ENCODE measurements at regions of chr1 and their contacts with region 1.

Region 1: GRCh38 chr1:198681831-198682759 is 43.3 kb downstream of the PTPRC start:
- DNase-seq: peak; percentile 94
- H3K4me3 Mint-ChIP-seq: peak overlapping the region; percentile 67
- H3K27ac Mint-ChIP-seq: peak overlapping the region; percentile 96
- H3K4me1 Mint-ChIP-seq: peaks cover 25% of the 10 kb centered on the region
- H3K27me3 Mint-ChIP-seq: no peaks in the 10 kb centered on the region
- CTCF ChIP-seq: no peak

Region 2: DNA sequence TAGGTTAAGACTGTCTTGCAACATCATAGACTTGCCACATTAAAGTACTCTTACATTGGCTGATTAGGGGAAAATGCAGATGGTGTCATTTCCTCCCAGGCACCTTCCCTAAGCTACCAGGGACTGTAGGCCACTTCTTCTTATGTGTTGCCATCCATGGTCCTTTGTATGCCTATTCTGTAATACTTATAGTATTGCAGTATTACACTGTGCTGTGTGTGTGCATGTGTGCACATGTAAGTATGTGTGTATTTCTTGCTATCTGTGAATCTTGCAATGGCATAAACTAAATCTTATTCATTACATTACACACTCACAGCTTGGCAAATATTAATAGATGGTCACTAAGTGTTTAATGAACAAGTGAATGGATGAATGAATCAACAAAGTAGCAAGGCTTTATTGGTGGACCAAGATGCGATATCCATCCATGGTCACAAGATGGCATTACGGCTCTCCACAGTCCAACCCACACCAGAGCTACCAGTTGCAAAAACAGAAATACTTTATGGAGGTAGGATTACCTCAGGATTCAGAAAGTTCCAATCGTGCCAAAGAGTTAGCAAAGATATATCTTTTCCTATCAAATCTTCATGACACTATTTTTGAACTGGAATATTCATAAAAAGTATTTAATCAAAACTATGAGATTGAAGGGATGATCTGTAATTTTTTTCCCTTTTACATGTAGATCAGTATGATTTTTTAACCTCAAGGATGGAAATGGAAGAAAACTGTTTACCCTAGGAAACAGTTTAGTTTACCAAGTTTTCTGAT is 1067.0 kb before region 1 on chr1:
- CTCF ChIA-PET with region 1: interaction called, 4 read pairs
- POLR2A ChIA-PET with region 1: interaction called, 3 read pairs
- intact Hi-C with region 1: loop called (anchors 1 kb)
- DNase-seq: peak; percentile 67
- H3K4me3 Mint-ChIP-seq: no peak overlapping the region
- H3K27ac Mint-ChIP-seq: no peak overlapping the region
- H3K4me1 Mint-ChIP-seq: no peaks in the 10 kb centered on the region
- H3K27me3 Mint-ChIP-seq: no peaks in the 10 kb centered on the region
- CTCF ChIP-seq: peak; percentile 82

Region 3: DNA sequence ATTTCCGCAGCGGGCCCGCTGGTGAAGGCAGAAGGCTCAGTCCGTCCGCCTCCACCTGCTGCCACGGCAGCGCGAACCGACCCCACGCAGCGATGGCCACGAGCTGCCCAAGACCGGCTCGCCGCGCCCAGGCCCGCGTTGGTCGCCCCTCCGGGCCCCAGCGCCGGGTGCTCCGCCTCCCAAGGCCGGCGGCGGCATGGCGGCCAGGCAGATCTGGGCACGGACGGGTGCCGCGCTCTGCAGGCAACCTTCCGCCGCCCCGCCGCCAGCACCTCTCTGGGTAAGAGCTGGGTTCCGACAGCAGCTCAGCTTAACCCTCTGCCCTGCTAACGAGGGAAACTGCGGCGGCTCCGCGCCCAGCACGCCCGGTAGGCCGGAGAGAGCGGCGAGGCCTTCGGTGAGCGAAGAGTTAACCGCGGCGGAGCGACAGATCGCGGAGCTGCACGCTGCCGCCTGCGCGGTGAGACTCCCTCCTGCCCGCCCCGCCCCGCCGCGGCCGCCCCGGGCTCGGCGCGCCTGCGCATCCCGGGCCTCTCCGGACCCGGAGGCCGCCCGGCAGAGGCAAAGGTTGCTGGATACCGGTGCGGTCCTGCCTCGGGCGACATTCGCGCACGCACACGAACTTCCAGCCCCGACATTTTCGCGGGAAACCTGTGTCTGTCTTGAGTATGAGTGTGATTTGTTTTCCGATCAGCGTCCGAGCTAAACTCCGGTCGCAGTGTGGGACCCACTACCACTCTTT is 779.5 kb before region 1 on chr1 and contains the start of gene C1orf53:
- CTCF ChIA-PET with region 1: interaction called, 3 read pairs
- POLR2A ChIA-PET with region 1: interaction called, 10 read pairs
- intact Hi-C with region 1: no loop called
- DNase-seq: peak; percentile 92
- H3K4me3 Mint-ChIP-seq: peak within 1 kb of the TSS; percentile 86
- H3K27ac Mint-ChIP-seq: peak within 1 kb of the TSS; percentile 93
- H3K4me1 Mint-ChIP-seq: peaks cover 26% of the 10 kb centered on the region
- H3K27me3 Mint-ChIP-seq: no peaks in the 10 kb centered on the region
- CTCF ChIP-seq: no peak
- total RNA-seq, gene C1orf53: 10.7 and 15.1 TPM in 2 replicates

Region 4: GRCh38 chr1:198088360-198089071 is 593.6 kb before region 1 on chr1:
- CTCF ChIA-PET with region 1: interaction called, 7 read pairs
- POLR2A ChIA-PET with region 1: interaction called, 3 read pairs
- intact Hi-C with region 1: loop called (anchors 2 kb)
- DNase-seq: peak; percentile 64
- H3K4me3 Mint-ChIP-seq: no peak overlapping the region
- H3K27ac Mint-ChIP-seq: no peak overlapping the region
- H3K4me1 Mint-ChIP-seq: peaks cover 7% of the 10 kb centered on the region
- H3K27me3 Mint-ChIP-seq: no peaks in the 10 kb centered on the region
- CTCF ChIP-seq: peak; percentile 71

Region 5: DNA sequence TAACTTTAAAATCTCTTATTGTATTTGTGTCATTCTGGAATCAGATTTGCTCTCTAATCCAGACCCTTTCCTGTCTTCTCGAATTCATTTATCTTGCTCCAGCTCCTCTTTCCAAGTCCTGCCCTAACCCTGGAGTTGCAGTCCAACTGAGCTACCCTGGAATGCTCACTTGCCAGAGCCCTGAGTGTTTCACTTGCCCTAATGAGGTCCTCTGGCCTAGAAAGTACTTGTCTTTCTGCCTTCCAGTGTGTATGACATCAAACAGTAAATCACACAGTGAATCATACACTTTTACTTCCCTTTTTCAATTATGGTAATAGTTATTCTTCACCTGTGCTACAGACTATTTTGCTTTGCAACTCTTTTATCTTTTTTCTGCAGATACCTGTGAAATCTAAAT is 428.4 kb before region 1 on chr1:
- CTCF ChIA-PET with region 1: no interaction called
- POLR2A ChIA-PET with region 1: no interaction called
- intact Hi-C with region 1: loop called (anchors 10 kb)
- DNase-seq: peak; percentile 46
- H3K4me3 Mint-ChIP-seq: peak overlapping the region; percentile 2
- H3K27ac Mint-ChIP-seq: peak overlapping the region; percentile 77
- H3K4me1 Mint-ChIP-seq: peaks cover 16% of the 10 kb centered on the region
- H3K27me3 Mint-ChIP-seq: no peaks in the 10 kb centered on the region
- CTCF ChIP-seq: no peak

Region 6: DNA sequence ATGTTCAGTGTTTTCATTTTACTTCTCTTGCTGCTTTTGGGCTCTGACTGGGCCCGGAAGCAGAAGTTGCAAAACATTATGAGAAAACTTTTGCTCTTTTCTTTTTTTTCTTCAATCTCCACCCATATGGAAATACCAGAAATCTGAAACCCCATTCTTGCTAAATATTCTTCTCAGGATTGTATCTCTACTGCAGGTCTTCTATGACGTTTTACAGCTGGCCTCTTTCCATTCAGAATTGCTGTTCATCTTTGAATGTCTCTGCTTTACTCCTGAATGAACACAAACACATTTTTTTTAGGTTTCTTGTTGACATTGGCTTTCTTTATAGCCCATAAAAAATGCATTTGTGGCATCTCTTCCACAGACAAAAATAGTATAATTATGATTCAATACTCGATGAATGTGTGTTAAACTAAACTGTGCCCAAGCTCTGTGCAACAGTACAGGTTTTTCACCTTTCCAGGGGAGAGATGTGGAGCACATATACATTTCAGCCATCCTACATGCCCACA is 24.5 kb before region 1 on chr1:
- CTCF ChIA-PET with region 1: interaction called, 7 read pairs
- POLR2A ChIA-PET with region 1: interaction called, 6 read pairs
- intact Hi-C with region 1: loop called (anchors 1 kb)
- DNase-seq: peak; percentile 96
- H3K4me3 Mint-ChIP-seq: peak overlapping the region; percentile 45
- H3K27ac Mint-ChIP-seq: peak overlapping the region; percentile 85
- H3K4me1 Mint-ChIP-seq: peaks cover 24% of the 10 kb centered on the region
- H3K27me3 Mint-ChIP-seq: no peaks in the 10 kb centered on the region
- CTCF ChIP-seq: no peak

Region 7: DNA sequence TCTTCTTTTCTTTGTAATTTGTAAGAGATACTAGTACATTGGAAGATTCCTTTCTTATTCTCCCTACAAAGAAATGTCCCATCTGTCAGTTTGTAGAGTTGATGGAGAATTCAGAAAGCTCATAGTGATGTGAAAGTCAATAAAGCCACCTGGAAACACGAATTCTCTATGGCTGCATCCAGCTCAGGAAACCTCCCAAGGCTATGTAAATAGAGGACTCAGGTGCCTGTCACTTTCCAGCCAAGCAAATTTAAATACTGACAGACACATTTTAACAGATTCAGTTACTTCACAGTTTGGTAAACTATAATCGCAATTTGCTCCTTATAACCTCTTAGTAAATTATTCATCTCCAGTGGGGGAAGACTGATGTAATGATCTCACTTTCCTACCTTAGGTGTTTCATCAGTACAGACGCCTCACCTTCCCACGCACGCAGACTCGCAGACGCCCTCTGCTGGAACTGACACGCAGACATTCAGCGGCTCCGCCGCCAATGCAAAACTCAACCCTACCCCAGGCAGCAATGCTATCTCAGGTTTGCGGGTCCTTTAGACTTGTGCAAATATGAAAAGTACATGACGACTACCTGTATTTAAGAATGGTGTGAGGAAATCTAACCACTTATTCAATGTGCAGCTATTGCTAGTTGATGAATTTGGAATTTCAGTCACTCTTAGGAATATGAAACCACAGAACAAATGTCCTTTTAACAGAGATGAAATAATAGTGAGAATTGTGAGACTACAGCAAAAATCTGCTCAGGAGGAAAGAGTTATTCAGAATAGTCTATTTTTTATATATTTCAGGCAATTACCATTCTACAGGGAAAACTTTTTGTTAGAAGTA is 17.3 kb after region 1 on chr1:
- CTCF ChIA-PET with region 1: interaction called, 12 read pairs
- POLR2A ChIA-PET with region 1: interaction called, 5 read pairs
- intact Hi-C with region 1: no loop called
- DNase-seq: peak; percentile 81
- H3K4me3 Mint-ChIP-seq: no peak overlapping the region
- H3K27ac Mint-ChIP-seq: no peak overlapping the region
- H3K4me1 Mint-ChIP-seq: peaks cover 10% of the 10 kb centered on the region
- H3K27me3 Mint-ChIP-seq: no peaks in the 10 kb centered on the region
- CTCF ChIP-seq: peak; percentile 96

Region 8: GRCh38 chr1:198823626-198824025 is 141.5 kb after region 1 on chr1:
- CTCF ChIA-PET with region 1: no interaction called
- POLR2A ChIA-PET with region 1: no interaction called
- intact Hi-C with region 1: no loop called
- DNase-seq: no peak
- H3K4me3 Mint-ChIP-seq: no peak overlapping the region
- H3K27ac Mint-ChIP-seq: no peak overlapping the region
- H3K4me1 Mint-ChIP-seq: no peaks in the 10 kb centered on the region
- H3K27me3 Mint-ChIP-seq: no peaks in the 10 kb centered on the region
- CTCF ChIP-seq: no peak

Region 9: DNA sequence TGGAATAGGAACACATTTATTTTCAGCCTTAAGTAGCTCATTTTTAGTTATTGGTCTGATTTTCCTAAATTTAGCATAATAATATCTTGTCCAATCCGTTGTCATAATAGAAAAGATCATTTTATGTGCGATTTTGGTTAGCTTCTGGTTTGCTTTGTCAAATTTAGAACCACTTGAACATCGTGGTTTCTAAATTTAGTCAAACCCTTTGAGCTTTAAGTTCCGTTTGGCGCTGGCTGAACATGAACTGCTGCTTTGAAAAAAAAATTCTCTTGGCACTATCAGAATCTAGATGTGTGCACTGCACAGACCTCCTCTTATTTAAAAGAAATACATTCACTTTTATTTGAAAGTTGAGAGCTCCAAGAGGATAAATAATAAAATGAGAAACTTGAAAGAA is 327.4 kb after region 1 on chr1:
- CTCF ChIA-PET with region 1: no interaction called
- POLR2A ChIA-PET with region 1: no interaction called
- intact Hi-C with region 1: no loop called
- DNase-seq: no peak
- H3K4me3 Mint-ChIP-seq: no peak overlapping the region
- H3K27ac Mint-ChIP-seq: no peak overlapping the region
- H3K4me1 Mint-ChIP-seq: no peaks in the 10 kb centered on the region
- H3K27me3 Mint-ChIP-seq: no peaks in the 10 kb centered on the region
- CTCF ChIP-seq: no peak